ENCODE measurements at regions of chr13 and their contacts with region 1.

Region 1: DNA sequence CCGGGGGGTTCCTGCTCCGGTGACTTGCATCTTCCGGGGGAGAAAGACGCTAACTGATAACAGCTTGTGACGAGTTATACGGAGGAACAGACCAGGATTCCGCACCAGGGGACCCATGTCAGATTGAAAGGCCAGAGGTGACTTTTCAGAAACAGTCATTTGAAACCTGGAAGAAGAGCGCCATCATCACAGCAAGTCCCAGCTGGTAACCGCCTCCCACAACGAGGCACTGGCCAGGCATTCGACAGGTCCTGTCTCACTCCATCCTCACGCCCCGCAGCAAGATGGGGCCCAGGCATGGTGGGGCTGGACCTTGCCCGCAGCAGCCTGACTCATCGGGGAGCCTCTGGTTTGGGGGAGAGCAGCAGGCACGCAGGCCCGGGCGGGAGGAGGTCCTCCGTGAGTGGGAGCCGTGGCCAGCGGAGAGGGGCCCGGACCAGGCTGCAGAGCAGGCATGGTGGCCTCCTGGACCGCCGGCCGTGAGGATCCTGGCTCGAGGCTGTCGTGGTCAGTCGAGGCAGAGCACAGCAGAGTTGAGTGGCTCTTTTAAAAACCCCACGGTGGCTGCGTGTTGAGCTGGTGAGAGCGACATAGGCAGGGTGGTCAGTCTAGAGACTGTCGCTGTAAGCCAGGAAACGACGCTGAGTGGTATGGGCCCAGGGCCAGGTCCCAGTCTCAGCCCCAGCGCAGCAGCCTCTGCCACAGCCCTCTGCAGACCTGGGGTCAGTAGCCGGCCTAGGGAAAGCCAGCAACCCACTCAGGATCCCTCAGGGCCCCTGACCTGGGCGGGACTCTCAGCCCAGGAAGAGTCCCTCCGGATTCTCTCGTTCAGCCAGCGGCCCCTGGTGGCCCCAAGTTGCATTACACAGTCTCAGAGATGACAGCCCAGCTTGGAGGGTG is 94.9 kb upstream of the MCF2L start:
- DNase-seq: peak; percentile 89
- ATAC-seq: peak; percentile 75
- H3K4me3 Mint-ChIP-seq: peak overlapping the region; percentile 46
- H3K27ac Mint-ChIP-seq: peak overlapping the region; percentile 91
- H3K4me1 Mint-ChIP-seq: peaks cover 16% of the 10 kb centered on the region
- H3K27me3 Mint-ChIP-seq: no peaks in the 10 kb centered on the region

Region 2: GRCh38 chr13:112495460-112495859 is 378.6 kb before region 1 on chr13:
- CTCF ChIA-PET with region 1: no interaction called
- POLR2A ChIA-PET with region 1: no interaction called
- intact Hi-C with region 1: no loop called
- DNase-seq: no peak
- ATAC-seq: no peak
- H3K4me3 Mint-ChIP-seq: no peak overlapping the region
- H3K27ac Mint-ChIP-seq: no peak overlapping the region
- H3K4me1 Mint-ChIP-seq: no peaks in the 10 kb centered on the region
- H3K27me3 Mint-ChIP-seq: no peaks in the 10 kb centered on the region

Region 3: DNA sequence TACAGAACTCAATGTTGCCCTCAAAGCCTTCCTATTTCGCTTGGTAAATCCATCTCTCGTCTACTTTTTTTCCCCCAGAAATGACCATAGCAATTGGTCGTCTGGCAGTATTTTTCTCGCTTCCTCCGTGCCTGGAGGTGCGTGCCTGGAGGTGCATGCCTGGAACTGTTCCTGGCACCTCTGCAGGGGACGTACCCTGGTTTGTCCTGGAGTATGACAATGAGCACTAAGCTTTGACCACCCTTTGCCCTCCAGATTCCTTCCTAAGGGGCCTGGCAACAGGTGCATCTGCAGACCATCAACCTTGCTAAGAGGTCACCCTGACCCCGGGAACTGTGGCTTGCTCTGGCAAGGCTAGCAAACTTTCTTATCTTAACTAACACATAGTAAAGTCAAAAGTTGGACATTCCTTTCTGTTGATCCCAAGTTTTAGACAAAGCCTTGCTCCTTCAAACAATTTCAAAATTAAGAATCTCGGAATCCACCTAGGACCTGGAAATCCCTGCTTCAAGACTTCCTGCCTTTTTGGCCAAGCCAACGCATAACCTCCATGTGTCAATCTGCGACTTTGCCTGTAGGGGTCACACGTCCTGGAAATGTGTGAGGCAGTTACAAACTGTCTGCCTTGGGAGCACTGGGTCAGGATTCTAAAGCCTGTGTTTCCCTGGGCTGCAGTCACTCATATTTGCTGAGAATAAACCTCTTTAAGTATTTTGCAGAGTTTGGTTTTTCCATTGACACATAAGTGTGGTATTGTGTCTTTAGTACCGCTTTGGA is 257.3 kb before region 1 on chr13:
- CTCF ChIA-PET with region 1: interaction called, 4 read pairs
- POLR2A ChIA-PET with region 1: no interaction called
- intact Hi-C with region 1: loop called (anchors 1 kb)
- DNase-seq: peak; percentile 51
- ATAC-seq: peak; percentile 78
- H3K4me3 Mint-ChIP-seq: no peak overlapping the region
- H3K27ac Mint-ChIP-seq: no peak overlapping the region
- H3K4me1 Mint-ChIP-seq: no peaks in the 10 kb centered on the region
- H3K27me3 Mint-ChIP-seq: peaks cover 8% of the 10 kb centered on the region

Region 4: DNA sequence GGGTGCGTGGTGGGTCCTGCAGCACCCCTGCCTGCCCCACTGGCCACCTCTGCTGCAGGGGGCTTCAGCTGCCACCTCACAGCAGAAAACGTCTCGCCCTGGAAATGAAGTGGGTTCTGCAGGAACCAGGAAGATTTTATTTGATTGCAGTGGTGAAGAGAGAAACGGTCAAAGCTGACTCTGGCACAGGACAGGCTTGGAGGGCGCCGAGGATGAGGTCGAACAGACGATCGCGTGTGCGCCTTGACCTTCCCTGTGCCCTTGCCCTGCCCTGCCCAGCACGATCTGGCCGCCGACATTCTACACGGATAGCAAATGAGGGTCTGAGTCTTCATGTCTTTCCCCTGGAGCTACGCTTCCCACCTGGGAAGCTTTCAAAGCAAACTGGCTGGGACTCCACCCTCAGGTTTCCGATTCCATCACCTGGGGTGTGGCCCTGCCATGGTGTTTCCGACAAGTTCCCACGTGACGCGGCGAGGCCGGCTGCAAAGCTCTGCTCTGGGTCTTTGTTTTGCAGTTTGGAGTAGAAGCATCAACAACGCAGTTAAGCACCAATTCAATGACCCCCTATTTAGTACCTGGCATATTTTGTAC is 235.8 kb before region 1 on chr13:
- CTCF ChIA-PET with region 1: interaction called, 20 read pairs
- POLR2A ChIA-PET with region 1: no interaction called
- intact Hi-C with region 1: loop called (anchors 1 kb)
- DNase-seq: peak; percentile 22
- ATAC-seq: no peak
- H3K4me3 Mint-ChIP-seq: no peak overlapping the region
- H3K27ac Mint-ChIP-seq: no peak overlapping the region
- H3K4me1 Mint-ChIP-seq: peaks cover 12% of the 10 kb centered on the region
- H3K27me3 Mint-ChIP-seq: peaks cover 8% of the 10 kb centered on the region

Region 5: DNA sequence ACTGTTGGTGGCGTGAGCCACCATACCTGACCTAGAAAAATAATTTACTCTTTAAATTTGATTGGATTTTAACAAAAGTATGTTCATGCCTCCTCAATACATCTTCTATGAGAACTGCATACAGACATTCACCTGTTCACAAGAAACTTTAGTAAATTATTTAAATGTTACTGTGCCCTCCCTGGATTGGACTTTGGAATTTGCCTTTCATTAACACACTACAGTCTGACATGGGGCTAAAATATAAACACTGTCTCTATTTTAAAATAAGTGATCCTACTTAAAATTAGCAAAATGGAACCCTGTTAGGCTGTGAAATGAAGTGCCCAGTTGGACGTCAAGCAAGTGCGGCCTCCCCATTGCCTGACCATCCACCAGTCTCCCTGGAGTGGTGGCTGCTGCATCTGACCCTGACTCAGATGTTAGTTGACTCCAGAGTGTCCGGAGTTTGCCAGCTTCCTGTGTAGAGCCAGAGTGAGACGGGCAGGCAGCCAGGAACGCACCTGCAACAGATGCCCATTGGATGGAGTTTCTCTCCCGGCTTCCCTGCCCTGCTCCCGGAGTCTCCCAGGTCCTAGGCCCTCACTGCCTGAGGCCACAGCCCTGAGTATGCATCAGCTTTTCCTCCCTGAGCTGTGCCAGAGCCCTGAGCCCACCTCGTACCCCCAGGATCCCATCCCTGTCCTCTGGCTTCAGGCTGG is 230.2 kb before region 1 on chr13:
- CTCF ChIA-PET with region 1: interaction called, 20 read pairs
- POLR2A ChIA-PET with region 1: no interaction called
- intact Hi-C with region 1: loop called (anchors 1 kb)
- DNase-seq: no peak
- ATAC-seq: no peak
- H3K4me3 Mint-ChIP-seq: no peak overlapping the region
- H3K27ac Mint-ChIP-seq: no peak overlapping the region
- H3K4me1 Mint-ChIP-seq: peaks cover 11% of the 10 kb centered on the region
- H3K27me3 Mint-ChIP-seq: peaks cover 8% of the 10 kb centered on the region